Posterior cingulate gyrus (tissue), 11 donors: ENCODE measurements at regions of chr7 and their contacts with region 1.

Region 1: DNA sequence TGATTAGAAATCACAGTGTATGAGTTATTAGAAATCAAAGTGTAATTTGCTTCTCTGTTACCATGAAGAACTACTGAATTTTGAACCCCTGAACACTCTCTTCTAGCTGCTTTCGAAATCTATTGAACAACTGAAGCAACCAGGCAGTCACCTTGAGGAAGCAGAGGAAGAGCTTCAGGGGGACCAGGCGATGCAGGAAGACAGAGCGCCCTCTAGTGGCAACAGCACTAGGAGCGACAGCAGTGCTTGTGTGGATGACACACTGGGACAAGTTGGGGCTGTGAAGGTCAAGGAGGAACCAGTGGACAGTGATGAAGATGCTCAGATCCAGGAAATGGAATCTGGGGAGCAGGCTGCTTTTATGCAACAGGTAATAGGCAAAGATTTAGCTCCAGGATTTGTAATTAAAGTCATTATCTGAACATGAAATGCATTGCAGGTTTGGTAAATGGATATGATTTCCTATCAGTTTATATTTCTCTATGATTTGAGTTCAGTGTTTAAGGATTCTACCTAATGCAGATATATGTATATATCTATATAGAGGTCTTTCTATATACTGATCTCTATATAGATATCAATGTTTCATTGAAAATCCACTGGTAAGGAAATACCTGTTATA is 170.7 kb downstream of the HDAC9 start:
- DNase-seq: peak; percentile 31 to 96 (median 75)

Region 2: GRCh38 chr7:18352339-18353255 is 313.6 kb before region 1 on chr7:
- intact Hi-C with region 1: loop called (anchors 1 kb)
- DNase-seq: peak in 6 of 10 donors; percentile 9 to 67 (median 40)

Region 3: DNA sequence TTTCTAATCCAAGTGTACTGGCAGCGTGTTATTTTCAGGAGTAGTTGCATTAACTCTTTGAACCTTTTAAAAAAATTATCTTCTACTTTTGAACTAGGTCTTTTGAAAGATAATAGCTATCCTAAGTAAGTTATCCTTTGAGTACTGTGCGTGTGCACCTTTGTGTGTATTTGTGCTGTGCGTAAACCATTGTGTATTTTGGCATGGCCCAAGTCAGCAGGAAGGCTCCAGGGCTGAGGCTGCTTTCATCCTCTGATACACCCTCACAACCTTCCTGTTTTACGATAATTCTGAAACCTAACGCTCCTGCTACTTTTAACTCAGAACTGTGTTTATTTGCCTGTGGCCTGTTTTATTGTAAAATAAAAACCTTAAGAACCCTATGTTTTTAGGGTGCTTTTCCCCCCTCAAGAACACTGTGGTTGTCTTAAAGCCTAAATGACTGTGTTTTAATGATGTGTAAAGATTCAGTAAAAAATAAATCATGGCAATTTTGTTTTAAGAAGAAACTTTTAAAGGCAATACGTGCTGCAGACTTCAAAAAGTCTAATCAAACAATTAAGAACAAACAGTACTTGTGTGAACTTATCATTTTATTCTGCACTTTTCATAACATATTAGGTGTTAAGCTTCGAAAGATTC is 113.2 kb before region 1 on chr7:
- intact Hi-C with region 1: no loop called
- DNase-seq: peak in 1 of 10 donors; percentile 62

Region 4: DNA sequence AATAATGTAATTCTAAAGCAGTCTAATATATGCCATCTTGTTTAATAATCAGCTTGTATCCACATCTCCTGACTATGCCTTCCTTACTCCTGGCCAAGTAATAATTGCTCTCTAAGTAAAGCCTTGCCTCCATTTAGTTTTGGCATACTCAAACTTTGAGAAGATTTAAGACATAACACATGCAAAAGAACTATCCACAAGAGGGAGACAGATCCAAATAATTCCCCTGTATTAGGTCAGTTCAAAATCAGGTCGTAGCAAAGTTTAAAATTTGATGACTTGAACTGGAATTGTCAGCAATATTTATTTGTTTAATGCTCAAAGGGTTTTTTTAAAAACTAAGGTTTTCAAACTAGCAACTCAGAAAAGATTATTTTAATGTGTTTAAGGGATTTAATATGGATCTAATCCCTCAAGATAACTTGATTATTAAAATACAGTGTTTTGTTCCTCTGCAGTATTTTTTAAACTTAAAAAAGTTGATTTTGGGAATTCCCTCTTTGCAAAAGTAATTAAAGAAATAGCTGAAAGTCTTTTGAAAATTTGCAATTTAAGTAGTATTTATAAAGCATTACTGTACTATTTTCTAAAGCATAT is 75.4 kb before region 1 on chr7:
- intact Hi-C with region 1: loop called (anchors 5 kb)
- DNase-seq: no peak